Spleen (tissue), 13 donors: ENCODE measurements at regions of chr12 and their contacts with region 1.

Region 1: GRCh38 chr12:98572010-98572409 is 21.5 kb upstream of the SLC25A3 start:
- DNase-seq: no peak
- H3K4me3 ChIP-seq: no peak overlapping the region
- H3K27ac ChIP-seq: no peak overlapping the region
- H3K4me1 ChIP-seq: peaks cover 0 to 3% (median 0%) of the 10 kb centered on the region in 6 donors
- H3K27me3 ChIP-seq: no peaks in the 10 kb centered on the region
- CTCF ChIP-seq: no peak
- POLR2A ChIP-seq: no peak

Region 2: DNA sequence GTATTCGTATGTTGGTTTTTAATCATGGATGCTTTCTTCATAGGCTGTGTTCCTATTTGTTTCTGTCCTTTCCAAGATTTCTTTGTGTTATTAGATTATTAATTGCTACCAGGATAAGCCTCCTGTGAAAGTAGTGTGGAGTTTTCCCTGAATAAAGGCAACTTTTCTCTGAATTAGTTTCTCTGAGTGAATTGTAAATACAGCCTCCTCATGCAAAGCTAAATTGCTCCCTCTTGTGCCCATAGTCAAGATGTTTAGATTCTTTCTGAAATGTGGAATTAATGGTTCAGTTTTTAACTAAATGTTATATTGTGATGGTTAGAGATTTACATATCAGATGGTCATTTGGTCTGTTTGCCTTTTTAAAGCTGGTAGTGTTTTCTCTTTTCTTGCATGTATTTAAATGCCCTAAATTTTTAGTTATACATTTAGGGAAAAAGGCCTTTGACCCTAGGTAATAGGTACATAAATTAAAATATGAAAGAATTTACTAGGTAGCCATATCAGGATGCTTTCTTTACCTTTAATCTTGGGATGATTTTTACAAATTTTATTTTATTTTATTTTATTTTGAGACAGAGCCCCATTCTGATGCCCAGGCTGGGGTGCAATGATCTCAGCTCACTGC is 82.0 kb after region 1 on chr12:
- intact Hi-C with region 1: loop called (anchors 5 kb)
- DNase-seq: no peak
- H3K4me3 ChIP-seq: no peak overlapping the region
- H3K27ac ChIP-seq: no peak overlapping the region
- H3K4me1 ChIP-seq: peaks cover 0 to 11% (median 0%) of the 10 kb centered on the region in 6 donors
- H3K27me3 ChIP-seq: no peaks in the 10 kb centered on the region
- CTCF ChIP-seq: peak in 9 of 11 experiments; percentile 26 to 63 (median 59)
- POLR2A ChIP-seq: no peak